Heart right ventricle (tissue), 16 donors: ENCODE measurements at regions of chr11 and their contacts with region 1.

Region 1: DNA sequence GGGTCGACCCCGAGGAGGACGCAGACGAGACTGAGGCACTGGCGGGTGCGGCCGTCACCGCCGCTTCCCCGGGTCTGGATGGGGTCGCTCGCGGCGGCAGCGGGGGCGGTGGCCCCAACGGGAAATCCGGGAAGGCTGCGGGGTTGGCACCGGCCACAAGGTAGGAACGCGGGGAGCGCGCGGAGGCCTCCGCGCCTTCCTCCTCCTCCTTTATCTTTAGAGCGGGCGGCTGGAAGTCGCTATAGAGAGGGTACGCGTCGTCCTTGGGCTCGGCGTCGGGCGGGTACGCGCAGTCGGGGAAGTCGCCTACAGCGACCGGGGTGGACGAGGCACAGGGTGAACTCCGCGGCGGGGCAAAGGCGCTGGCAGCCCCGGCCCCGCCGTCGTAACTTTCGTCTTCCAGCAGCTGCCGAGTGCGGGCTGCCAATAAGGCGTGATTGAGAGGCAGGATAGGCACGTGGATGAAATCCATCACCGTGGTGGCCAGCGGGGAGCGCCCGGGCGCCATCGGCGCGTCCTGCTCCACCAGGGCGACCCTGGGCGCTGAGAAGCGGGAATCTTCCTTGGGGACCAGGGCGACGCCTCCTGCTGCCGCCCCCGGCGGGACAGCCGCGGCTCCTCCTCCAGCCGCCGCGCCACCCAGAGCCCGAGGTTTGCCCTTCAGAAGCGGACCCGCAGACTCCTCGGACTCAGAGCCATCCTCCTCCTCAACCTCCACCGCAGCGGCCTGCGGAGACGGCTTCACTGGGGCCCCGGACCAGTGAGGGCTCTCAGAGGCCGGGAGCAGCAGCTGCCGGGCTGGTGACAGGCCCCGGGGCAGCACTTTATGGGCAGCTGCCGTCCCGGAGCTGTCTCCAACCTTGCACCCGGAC is 1.7 kb downstream of the PGR start:
- DNase-seq: peak; percentile 23 to 50
- ATAC-seq: peak; percentile 37 to 79 (median 60)
- H3K4me3 ChIP-seq: peak overlapping the region; percentile 23 to 83 (median 76)
- H3K27ac ChIP-seq: peak overlapping the region; percentile 68 to 89 (median 86)
- H3K4me1 ChIP-seq: peaks cover 0 to 38% (median 10%) of the 10 kb centered on the region in 9 donors
- H3K27me3 ChIP-seq: peaks cover 0 to 60% (median 16%) of the 10 kb centered on the region in 7 donors
- CTCF ChIP-seq: peak in 2 of 9 donors; percentile 20 to 23

Region 2: DNA sequence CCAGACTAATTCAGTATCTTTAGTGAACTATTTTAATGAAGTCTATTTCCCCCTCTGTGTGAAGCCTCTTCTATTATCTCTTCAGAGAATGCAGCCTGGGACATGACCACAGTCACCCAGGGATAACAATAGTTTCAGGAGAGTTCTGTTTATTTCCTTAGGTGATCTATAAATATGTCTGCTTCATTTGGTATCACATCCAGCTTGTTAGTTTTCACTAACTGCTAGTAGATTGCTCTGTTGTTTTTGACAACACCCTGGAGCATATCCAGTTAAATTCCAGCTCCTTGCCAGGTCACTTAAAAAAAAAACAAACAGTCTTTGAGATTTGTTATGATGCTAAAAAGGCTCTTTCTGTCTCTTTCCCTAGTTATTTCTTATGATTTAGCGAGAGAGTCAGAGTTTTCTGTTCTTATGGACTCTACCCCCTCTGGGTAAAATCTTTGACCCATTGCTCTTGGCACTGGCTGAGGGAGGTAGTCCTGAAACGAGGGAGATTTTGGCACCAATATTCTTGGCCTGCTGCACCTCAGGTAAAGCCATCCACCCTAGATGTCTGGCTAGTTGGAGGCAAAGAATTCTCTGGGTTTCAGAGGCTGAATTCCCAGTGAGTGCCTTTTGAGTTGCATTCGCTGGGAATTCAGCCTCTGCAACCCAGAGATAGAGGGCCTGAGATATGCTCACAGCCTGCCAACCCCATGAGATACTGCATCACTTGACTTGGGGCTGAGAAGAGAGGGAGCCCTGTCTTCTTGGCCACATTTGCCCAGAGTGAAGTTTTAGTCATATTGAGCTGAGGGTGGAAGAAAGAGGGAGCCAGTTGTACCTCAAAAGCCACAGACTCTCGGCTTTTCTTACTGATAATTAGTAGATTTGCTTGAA is 157.4 kb before region 1 on chr11:
- intact Hi-C with region 1: loop called in 1 of 10 experiments (anchors 10 kb)
- DNase-seq: peak in 1 of 2 donors; percentile 4
- ATAC-seq: peak in 7 of 8 donors; percentile 12 to 89 (median 75)
- H3K4me3 ChIP-seq: no peak overlapping the region
- H3K27ac ChIP-seq: peak overlapping the region in 6 of 10 donors; percentile 22 to 68 (median 58)
- H3K4me1 ChIP-seq: peaks cover 0 to 16% (median 9%) of the 10 kb centered on the region in 9 donors
- H3K27me3 ChIP-seq: no peaks in the 10 kb centered on the region
- CTCF ChIP-seq: no peak

Region 3: DNA sequence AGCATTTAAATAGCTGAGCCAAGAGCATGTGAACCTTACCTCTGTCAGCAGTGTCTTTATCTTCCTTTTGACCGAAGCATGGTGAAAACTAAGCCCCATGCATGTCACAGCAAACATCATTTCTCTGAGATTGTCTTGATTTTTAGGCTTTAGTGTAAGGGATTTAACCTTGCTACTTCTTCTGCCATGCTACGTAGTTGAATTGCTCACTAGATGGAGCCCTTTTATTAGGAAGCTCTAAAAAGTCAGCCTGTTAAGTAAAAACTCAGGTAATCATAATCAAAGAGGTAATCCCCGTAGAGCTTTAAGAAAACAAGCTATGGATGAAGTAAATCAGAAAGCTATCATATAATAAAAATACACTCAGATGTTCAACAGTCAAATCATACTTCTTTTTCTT is 147.8 kb before region 1 on chr11:
- intact Hi-C with region 1: loop called in 3 of 10 experiments (anchors 10 kb)
- DNase-seq: no peak
- ATAC-seq: peak in 3 of 8 donors; percentile 39 to 54 (median 53)
- H3K4me3 ChIP-seq: no peak overlapping the region
- H3K27ac ChIP-seq: no peak overlapping the region
- H3K4me1 ChIP-seq: no peaks in the 10 kb centered on the region
- H3K27me3 ChIP-seq: no peaks in the 10 kb centered on the region
- CTCF ChIP-seq: peak in 7 of 9 donors; percentile 45 to 68 (median 56)

Region 4: GRCh38 chr11:100991541-100991940 is 136.4 kb before region 1 on chr11:
- intact Hi-C with region 1: loop called in 4 of 10 experiments (anchors 10 kb)
- DNase-seq: no peak
- ATAC-seq: no peak
- H3K4me3 ChIP-seq: no peak overlapping the region
- H3K27ac ChIP-seq: no peak overlapping the region
- H3K4me1 ChIP-seq: peaks cover 0 to 6% (median 0%) of the 10 kb centered on the region in 9 donors
- H3K27me3 ChIP-seq: no peaks in the 10 kb centered on the region
- CTCF ChIP-seq: no peak

Region 5: DNA sequence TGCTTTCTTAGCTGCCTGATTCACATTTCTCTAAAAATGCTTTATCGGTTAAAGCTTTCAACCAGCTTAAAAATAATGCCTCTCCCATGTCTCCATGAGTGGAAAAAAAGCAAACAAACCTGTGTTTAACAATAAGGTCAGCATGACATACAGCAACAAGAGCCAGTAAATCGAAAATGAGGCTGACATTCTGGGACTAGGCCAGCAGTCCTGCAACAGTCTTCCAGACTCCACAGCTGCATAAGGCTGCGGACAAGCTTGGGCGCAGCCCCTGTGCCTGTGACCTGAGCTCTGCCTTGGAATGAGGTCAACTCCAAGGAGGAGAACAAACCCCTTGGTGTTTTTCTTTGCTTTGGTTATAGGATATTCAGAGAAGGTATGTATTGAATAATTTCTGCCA is 93.9 kb before region 1 on chr11:
- intact Hi-C with region 1: loop called in 4 of 10 experiments (anchors 5 to 10 kb)
- DNase-seq: peak; percentile 45 to 84
- ATAC-seq: peak; percentile 92 to 97 (median 96)
- H3K4me3 ChIP-seq: peak overlapping the region in 6 of 10 donors; percentile 9 to 41 (median 34)
- H3K27ac ChIP-seq: peak overlapping the region; percentile 3 to 84 (median 62)
- H3K4me1 ChIP-seq: peaks cover 0 to 20% (median 6%) of the 10 kb centered on the region in 9 donors
- H3K27me3 ChIP-seq: no peaks in the 10 kb centered on the region
- CTCF ChIP-seq: no peak

Region 6: GRCh38 chr11:101061606-101062005 is 66.3 kb before region 1 on chr11:
- intact Hi-C with region 1: loop called in 1 of 10 experiments (anchors 10 kb)
- DNase-seq: no peak
- ATAC-seq: peak; percentile 69 to 91 (median 84)
- H3K4me3 ChIP-seq: no peak overlapping the region
- H3K27ac ChIP-seq: peak overlapping the region in 7 of 10 donors; percentile 4 to 75 (median 53)
- H3K4me1 ChIP-seq: peaks cover 0 to 45% (median 26%) of the 10 kb centered on the region in 9 donors
- H3K27me3 ChIP-seq: no peaks in the 10 kb centered on the region
- CTCF ChIP-seq: no peak